ENCODE measurements at regions of chr1 and their contacts with region 1.

Region 1: DNA sequence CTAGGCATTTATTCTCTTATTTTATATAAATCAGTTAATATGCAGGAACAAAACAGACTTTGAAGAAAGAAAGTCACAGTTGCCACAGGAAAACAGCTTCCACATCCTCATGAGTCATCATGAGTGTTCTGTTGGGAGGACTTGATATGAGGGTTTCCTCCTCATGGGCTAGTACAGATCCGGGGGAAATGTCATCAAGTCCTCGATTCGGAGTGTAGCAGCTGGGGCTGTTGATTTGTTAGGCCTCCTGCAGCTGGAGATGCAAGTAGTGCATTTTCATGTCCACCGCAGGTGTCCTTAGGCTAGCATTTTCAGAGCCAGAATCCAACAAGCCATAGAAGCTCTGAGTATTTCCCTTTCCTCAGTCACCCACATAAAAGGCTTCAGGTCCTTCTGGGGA is 36.7 kb downstream of the ADAM30 start:
- DNase-seq: no peak
- H3K4me3 ChIP-seq: no peak overlapping the region
- H3K27ac ChIP-seq: no peak overlapping the region
- H3K4me1 ChIP-seq: no peaks in the 10 kb centered on the region
- CTCF ChIP-seq: no peak

Region 2: DNA sequence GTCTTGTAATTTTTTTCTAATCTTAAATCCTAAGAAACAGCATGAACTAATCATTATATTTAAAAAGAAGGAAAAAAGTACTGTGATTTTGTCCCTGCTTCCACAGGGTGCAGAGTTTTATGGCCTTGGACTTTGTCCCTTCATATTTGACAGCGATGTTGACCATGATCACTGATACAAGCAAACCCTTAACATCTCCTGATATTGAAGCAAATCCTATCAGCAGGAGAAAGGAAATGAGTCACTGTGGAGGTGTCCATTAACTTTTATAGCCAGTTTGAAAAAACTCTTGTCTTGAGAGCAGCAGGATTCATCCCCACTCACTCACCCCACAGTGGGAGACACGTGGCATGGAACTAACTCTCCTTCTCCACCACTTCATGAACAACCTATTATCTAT is 43.2 kb before region 1 on chr1:
- CTCF ChIA-PET with region 1: no interaction called
- POLR2A ChIA-PET with region 1: no interaction called
- intact Hi-C with region 1: loop called (anchors 10 kb)
- DNase-seq: no peak
- H3K4me3 ChIP-seq: no peak overlapping the region
- H3K27ac ChIP-seq: no peak overlapping the region
- H3K4me1 ChIP-seq: no peaks in the 10 kb centered on the region
- CTCF ChIP-seq: no peak